ENCODE measurements at regions of chr5 and their contacts with region 1.

Region 1: DNA sequence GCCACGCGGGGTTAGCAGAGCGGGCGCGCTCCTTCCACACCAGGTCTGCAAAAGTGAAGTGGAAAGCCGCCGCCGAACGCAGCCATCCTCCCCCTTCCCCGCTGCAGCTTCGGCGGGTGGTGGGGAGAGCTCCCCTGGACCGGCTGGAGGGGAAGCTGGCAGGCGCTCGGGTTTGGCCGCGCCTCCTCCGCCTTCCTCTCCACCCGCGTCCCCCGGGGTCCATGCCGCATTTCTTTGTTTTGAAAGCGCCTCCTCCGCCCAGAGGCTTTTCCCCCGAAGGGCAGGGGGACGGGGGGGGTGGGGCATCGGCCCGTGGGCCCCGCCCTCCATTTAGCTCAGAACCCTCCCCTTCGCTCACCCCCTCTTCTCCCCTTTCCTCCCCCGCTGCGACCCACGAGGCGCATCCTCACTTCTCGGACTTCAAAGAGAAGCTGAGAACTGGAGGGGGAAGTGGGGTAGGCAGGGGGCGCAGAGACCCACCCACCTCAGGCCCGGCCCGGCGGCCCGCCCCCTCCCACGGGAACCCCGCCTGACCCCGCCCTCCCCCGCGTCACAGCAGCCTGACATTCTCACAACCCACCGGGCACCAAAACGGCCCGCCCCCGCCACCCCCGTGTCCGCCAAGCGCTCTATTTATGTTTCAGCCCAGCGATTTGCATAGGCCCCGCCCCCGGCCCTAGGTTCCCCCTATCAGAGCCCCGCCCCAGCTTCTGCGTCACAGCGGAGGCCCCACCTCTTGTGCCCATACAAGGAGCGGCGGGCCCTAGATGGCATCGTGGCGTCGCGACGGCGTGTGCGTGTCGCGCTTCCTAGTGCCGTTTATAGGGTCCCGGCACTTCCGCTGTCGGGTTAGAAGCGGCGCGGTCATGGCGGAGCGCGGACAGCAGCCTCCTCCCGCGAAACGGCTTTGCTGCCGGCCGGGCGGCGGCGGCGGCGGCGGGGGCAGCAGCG is at the start of gene ZSWIM6:
- DNase-seq: peak; percentile 99
- ATAC-seq: peak; percentile 90
- H3K4me3 Mint-ChIP-seq: peak within 1 kb of the TSS; percentile 79
- H3K27ac Mint-ChIP-seq: peak within 1 kb of the TSS; percentile 84
- H3K4me1 Mint-ChIP-seq: peaks cover 41% of the 10 kb centered on the region
- H3K27me3 Mint-ChIP-seq: peaks cover 25% of the 10 kb centered on the region
- total RNA-seq, gene ZSWIM6: 4.5 to 5.7 TPM

Region 2: GRCh38 chr5:60944904-60945812 is 386.5 kb before region 1 on chr5 and contains the starts of genes ERCC8 and NDUFAF2:
- CTCF ChIA-PET with region 1: no interaction called
- POLR2A ChIA-PET with region 1: no interaction called
- intact Hi-C with region 1: loop called (anchors 2 kb)
- DNase-seq: peak; percentile 92
- ATAC-seq: peak; percentile 99
- H3K4me3 Mint-ChIP-seq: no peak within 1 kb of the TSS
- H3K27ac Mint-ChIP-seq: peak within 1 kb of the TSS; percentile 84
- H3K4me1 Mint-ChIP-seq: peaks cover 23% of the 10 kb centered on the region
- H3K27me3 Mint-ChIP-seq: no peaks in the 10 kb centered on the region
- total RNA-seq, gene ERCC8: 9.0 to 12.5 TPM
- total RNA-seq, gene NDUFAF2: 39.3 to 46.6 TPM

Region 3: DNA sequence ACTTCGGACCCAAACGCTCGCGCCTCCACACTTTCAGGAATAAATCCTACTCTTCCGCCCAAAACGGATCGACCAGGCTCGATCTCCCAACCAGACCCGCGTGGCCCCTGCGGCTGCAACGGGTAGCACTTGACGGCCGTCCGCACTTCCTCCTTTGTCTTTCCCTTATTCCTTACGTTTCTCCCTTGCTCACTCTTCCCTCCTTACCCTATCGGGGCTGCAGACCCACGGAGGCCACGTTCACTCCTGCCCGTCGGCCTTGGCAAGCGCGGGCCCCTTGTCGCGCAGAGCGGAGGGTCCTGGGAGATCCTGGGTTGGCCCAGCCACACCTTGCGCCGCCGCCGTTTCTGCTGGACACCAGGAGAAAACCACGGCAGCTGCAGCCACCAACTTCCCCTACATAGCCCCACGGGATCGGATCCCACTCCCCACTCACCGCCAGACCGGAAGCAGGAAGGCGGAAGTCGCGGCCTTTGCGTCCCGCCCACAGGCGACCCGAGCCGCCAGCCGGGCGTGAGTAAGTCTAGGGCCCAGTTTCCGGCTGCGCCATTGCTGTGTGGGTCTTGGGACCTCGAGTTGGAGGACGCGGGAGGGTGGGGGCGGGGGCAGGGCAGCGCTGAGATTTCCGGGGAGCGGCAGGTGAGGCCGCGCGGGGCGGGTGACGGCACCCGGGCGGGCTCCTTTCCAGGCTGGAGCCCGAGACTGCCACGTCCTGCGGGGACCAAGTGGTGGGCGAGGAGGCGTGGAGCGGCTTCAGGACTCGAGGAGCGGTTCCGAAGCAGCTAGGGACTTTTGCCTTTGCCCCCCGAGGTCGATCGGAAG is 169.5 kb before region 1 on chr5 and contains the start of gene SMIM15:
- CTCF ChIA-PET with region 1: interaction called, 3 read pairs
- POLR2A ChIA-PET with region 1: no interaction called
- intact Hi-C with region 1: loop called (anchors 1 kb)
- DNase-seq: peak; percentile 91
- ATAC-seq: peak; percentile 94
- H3K4me3 Mint-ChIP-seq: peak within 1 kb of the TSS; percentile 88
- H3K27ac Mint-ChIP-seq: peak within 1 kb of the TSS; percentile 95
- H3K4me1 Mint-ChIP-seq: peaks cover 35% of the 10 kb centered on the region
- H3K27me3 Mint-ChIP-seq: no peaks in the 10 kb centered on the region
- total RNA-seq, gene SMIM15: 73.5 to 84.0 TPM

Region 4: GRCh38 chr5:61306511-61307131 is 25.1 kb before region 1 on chr5:
- CTCF ChIA-PET with region 1: interaction called, 5 read pairs
- POLR2A ChIA-PET with region 1: interaction called, 3 read pairs
- intact Hi-C with region 1: loop called in 1 of 2 experiments (anchors 2 kb)
- DNase-seq: peak; percentile 56
- ATAC-seq: peak; percentile 97
- H3K4me3 Mint-ChIP-seq: no peak overlapping the region
- H3K27ac Mint-ChIP-seq: peak overlapping the region; percentile 62
- H3K4me1 Mint-ChIP-seq: peaks cover 9% of the 10 kb centered on the region
- H3K27me3 Mint-ChIP-seq: peaks cover 12% of the 10 kb centered on the region

Region 5: DNA sequence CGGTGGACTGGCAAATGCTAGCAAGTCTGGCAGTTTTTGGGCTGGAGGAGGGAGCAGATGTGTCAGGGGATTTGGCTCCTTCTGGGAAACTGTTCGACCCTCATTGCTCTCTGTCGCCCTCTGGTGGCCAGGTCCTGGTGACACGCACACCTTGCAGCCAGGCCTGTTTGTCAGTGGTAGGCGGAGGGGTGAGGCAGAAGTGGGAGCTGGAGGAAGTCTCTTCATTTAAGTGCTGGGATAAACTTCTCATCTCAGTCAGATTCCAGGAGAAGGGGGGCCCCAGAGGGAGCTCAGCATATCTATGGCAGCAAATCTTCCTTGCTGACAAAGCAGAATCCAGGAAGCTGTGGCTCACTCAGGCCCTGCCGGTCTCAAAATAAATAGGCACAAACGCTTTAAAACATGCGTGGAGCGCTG is 326.9 kb after region 1 on chr5:
- CTCF ChIA-PET with region 1: interaction called, 3 read pairs
- POLR2A ChIA-PET with region 1: no interaction called
- intact Hi-C with region 1: loop called in 1 of 2 experiments (anchors 2 kb)
- DNase-seq: peak; percentile 91
- ATAC-seq: peak; percentile 86
- H3K4me3 Mint-ChIP-seq: no peak overlapping the region
- H3K27ac Mint-ChIP-seq: no peak overlapping the region
- H3K4me1 Mint-ChIP-seq: no peaks in the 10 kb centered on the region
- H3K27me3 Mint-ChIP-seq: peaks cover 3% of the 10 kb centered on the region

Region 6: GRCh38 chr5:62412537-62413329 is 1081.1 kb after region 1 on chr5 and contains the start of gene IPO11:
- CTCF ChIA-PET with region 1: no interaction called
- POLR2A ChIA-PET with region 1: no interaction called
- intact Hi-C with region 1: loop called (anchors 1 to 10 kb)
- DNase-seq: peak; percentile 99
- ATAC-seq: peak; percentile 99
- H3K4me3 Mint-ChIP-seq: peak within 1 kb of the TSS; percentile 90
- H3K27ac Mint-ChIP-seq: peak within 1 kb of the TSS; percentile 85
- H3K4me1 Mint-ChIP-seq: peaks cover 25% of the 10 kb centered on the region
- H3K27me3 Mint-ChIP-seq: no peaks in the 10 kb centered on the region
- total RNA-seq, gene IPO11: 57.2 to 69.9 TPM

Measured in activated CD4-positive, alpha-beta T cell treated with anti-CD3 and anti-CD28 coated beads for 36 hours (primary cell).